Endothelial cell of umbilical vein (primary cell): ENCODE measurements at regions of chr7 and their contacts with region 1.

Region 1: DNA sequence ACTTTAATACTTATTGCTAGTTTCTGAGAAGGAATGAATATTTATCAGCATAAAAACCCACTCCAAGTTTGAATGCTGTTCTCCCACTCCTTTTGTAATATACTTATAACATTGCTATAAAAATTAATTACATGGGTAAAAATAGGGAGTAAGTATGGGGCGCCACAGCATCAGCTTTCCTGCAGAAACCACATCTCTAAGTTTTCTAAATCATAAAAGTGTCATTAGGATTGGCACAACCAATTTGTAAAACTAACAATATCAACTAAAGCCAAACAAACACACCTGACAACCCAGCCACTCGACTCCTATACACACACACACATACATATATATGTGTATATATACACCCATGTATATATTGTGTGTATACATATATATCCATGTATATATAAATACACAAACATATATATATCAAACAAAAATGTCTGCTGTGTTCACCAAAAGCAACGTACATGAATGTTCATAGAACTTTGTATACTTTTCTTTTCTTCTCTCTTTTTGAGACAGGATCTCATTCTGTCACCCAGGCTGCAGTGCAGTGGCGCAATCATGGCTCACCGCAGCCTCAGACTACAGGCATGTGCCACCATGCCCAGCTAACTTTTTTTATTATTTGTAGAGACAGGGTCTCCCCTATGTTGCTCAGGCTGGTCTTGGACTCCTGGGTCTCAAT is 14.8 kb upstream of the LRRC17 start:
- DNase-seq: no peak
- H3K4me3 ChIP-seq: no peak overlapping the region
- H3K27ac ChIP-seq: no peak overlapping the region
- H3K4me1 ChIP-seq: peaks cover 9% of the 10 kb centered on the region
- H3K27me3 ChIP-seq: no peaks in the 10 kb centered on the region
- CTCF ChIP-seq: no peak
- POLR2A ChIP-seq: no peak

Region 2: DNA sequence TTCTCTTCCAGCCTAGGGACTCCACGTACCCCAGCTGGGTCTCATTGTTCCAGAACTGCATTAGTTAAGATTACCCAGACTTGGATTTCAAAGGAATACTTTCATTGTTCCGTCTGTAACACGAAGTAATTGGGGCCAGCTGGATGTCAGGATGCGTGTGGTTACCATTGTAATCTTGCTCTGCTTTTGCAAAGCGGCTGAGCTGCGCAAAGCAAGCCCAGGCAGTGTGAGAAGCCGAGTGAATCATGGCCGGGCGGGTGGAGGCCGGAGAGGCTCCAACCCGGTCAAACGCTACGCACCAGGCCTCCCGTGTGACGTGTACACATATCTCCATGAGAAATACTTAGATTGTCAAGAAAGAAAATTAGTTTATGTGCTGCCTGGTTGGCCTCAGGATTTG is 35.8 kb after region 1 on chr7:
- CTCF ChIA-PET with region 1: no interaction called
- POLR2A ChIA-PET with region 1: no interaction called
- dilution Hi-C with region 1: no loop called
- intact Hi-C with region 1: loop called (anchors 1 kb)
- DNase-seq: no peak
- H3K4me3 ChIP-seq: no peak overlapping the region
- H3K27ac ChIP-seq: no peak overlapping the region
- H3K4me1 ChIP-seq: peaks cover 9% of the 10 kb centered on the region
- H3K27me3 ChIP-seq: no peaks in the 10 kb centered on the region
- CTCF ChIP-seq: no peak
- POLR2A ChIP-seq: no peak